K562 (cell line): ENCODE measurements at regions of chr15 and their contacts with region 1.

Region 1: GRCh38 chr15:55434989-55435825 is 26.9 kb downstream of the PIERCE2 start:
- DNase-seq: peak; percentile 33 to 76 (median 48)
- ATAC-seq: peak; percentile 96
- H3K4me3 ChIP-seq: no peak overlapping the region
- H3K27ac ChIP-seq: no peak overlapping the region
- H3K4me1 ChIP-seq: no peaks in the 10 kb centered on the region; a peak in 1 of 5 replicates
- H3K27me3 ChIP-seq: no peaks in the 10 kb centered on the region
- CTCF ChIP-seq: peak; percentile 55 to 77 (median 69); a peak in 5 of 6 replicates
- EP300 ChIP-seq: no peak
- POLR2A ChIP-seq: no peak
- RAD21 ChIP-seq: peak; percentile 75 to 85

Region 2: DNA sequence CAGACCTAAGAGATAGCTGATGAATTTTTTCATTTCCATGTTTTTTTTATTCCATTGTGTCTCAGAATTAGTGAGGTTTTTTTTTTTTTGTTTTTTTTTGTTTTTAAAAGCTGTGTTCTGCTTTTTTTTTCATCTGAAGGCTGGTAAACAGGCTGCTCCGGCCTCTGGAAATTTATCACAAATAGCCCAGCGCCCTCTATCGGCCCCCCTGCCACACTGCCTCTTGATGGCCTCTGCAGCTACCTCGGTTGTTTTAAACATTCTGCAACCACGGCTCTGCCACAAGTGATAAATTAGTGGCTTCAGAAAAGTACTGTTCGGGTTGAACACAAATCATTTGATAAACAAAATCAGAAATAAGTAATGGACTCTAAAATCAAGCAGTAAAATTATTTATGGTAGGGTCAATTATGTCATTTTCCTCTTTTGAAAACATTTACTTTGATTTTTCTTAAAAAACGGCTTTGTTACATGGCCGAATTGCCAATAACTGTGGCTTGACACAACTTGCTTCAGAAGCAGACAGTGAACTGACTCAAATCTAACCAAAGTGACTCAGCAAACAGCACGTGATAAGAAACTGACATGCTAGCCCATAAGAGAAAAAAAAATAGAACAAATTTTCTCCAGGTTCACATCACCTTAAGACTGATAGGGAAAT is 326.2 kb before region 1 on chr15:
- CTCF ChIA-PET with region 1: no interaction called
- POLR2A ChIA-PET with region 1: no interaction called
- in situ Hi-C with region 1: no loop called
- intact Hi-C with region 1: loop called (anchors 5 kb)
- DNase-seq: peak; percentile 67 to 72 (median 69)
- ATAC-seq: peak; percentile 89
- H3K4me3 ChIP-seq: no peak overlapping the region
- H3K27ac ChIP-seq: peak overlapping the region; percentile 37; the same call in 1 of the 3 replicates
- H3K4me1 ChIP-seq: peaks cover 0 to 8% of the 10 kb centered on the region in 2 experiments; a peak in 2 of 5 replicates
- H3K27me3 ChIP-seq: no peaks in the 10 kb centered on the region
- CTCF ChIP-seq: peak; percentile 65 to 80 (median 77)
- EP300 ChIP-seq: no peak
- POLR2A ChIP-seq: no peak
- RAD21 ChIP-seq: peak; percentile 28 to 62; a peak in 2 of 4 replicates

Region 3: GRCh38 chr15:55196458-55197361 is 238.5 kb before region 1 on chr15 and contains the start of gene RSL24D1:
- CTCF ChIA-PET with region 1: no interaction called
- POLR2A ChIA-PET with region 1: interaction called, 5 read pairs
- in situ Hi-C with region 1: no loop called
- intact Hi-C with region 1: loop called (anchors 5 kb)
- DNase-seq: peak; percentile 84 to 99 (median 88)
- ATAC-seq: peak; percentile 96
- H3K4me3 ChIP-seq: peak within 1 kb of the TSS; percentile 90
- H3K27ac ChIP-seq: peak within 1 kb of the TSS; percentile 94
- H3K4me1 ChIP-seq: peaks cover 3 to 20% of the 10 kb centered on the region in 2 experiments; a peak in 3 of 5 replicates
- H3K27me3 ChIP-seq: no peaks in the 10 kb centered on the region
- CTCF ChIP-seq: peak; percentile 59 to 68 (median 62)
- EP300 ChIP-seq: peak; percentile 48; the same call in 1 of the 2 replicates
- POLR2A ChIP-seq: peak; percentile 94
- RAD21 ChIP-seq: peak; percentile 17 to 41; a peak in 3 of 4 replicates
- polyA plus RNA-seq, gene RSL24D1: 272 to 324 TPM

Region 4: GRCh38 chr15:55221090-55222011 is 213.9 kb before region 1 on chr15:
- CTCF ChIA-PET with region 1: interaction called, 13 read pairs
- POLR2A ChIA-PET with region 1: no interaction called
- in situ Hi-C with region 1: loop called (anchors 5 kb)
- intact Hi-C with region 1: loop called (anchors 1 kb)
- DNase-seq: no peak
- ATAC-seq: peak; percentile 19
- H3K4me3 ChIP-seq: no peak overlapping the region
- H3K27ac ChIP-seq: peak overlapping the region; percentile 35; the same call in 1 of the 3 replicates
- H3K4me1 ChIP-seq: peaks cover 0 to 28% of the 10 kb centered on the region in 2 experiments; a peak in 4 of 5 replicates
- H3K27me3 ChIP-seq: no peaks in the 10 kb centered on the region
- CTCF ChIP-seq: no peak
- EP300 ChIP-seq: no peak
- POLR2A ChIP-seq: no peak
- RAD21 ChIP-seq: 0 out of 4 replicates have a peak, but pooled peaks of 1 of the 2 experiments have one; percentile 12

Region 5: DNA sequence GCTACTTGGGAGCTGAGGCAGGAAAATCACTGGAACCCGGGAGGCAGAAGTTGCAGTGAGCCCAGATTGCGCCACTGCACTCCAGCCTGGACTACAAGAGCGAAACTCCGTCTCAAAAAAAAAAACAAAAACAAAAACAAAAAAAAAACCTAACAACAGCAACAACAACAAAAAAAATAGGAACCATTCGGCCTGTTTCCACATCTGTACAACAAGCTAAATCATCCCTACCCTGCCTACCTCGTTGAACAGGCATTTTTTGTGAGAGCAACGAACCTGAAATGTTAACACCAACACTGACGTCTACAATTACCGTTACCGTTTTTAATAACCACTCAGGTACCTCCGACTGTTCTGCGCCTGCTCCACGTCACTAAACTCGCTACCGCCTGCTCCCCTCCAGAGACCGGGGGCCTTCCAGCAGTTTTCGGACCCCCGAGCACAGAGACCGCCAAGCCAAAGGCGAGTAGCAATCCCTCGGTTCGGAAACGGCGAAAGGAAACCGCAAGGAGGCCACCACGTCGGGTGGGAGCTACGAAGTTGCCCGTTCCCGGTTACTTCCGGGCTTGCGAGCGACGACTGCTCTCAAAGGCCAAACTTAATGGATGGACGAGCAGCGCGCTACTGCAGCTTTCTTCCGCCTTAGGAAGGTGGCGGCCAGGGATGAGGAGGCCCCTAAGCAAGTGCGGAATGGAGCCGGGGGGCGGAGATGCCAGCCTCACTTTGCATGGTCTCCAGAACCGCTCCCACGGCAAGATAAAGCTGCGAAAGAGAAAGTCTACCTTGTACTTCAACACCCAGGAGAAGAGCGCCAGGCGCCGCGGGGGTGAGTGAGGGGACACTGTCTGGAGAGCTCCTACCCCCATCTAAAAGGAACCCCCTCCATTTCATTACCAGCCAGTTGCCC is 116.4 kb before region 1 on chr15 and contains the starts of genes PIGB and PIGBOS1:
- CTCF ChIA-PET with region 1: no interaction called
- POLR2A ChIA-PET with region 1: no interaction called
- in situ Hi-C with region 1: no loop called
- intact Hi-C with region 1: loop called (anchors 1 kb)
- DNase-seq: peak; percentile 65 to 93 (median 72)
- ATAC-seq: peak; percentile 91
- H3K4me3 ChIP-seq: peak within 1 kb of the TSS; percentile 69
- H3K27ac ChIP-seq: peak within 1 kb of the TSS; percentile 96
- H3K4me1 ChIP-seq: peaks cover 4 to 9% of the 10 kb centered on the region in 2 experiments; a peak in 2 of 5 replicates
- H3K27me3 ChIP-seq: no peaks in the 10 kb centered on the region
- CTCF ChIP-seq: no peak
- EP300 ChIP-seq: peak; percentile 29; the same call in 1 of the 2 replicates
- POLR2A ChIP-seq: peak; percentile 94
- RAD21 ChIP-seq: no peak
- polyA plus RNA-seq, gene PIGB: 21.0 to 24.4 TPM
- polyA plus RNA-seq, gene PIGBOS1: 70.4 to 76.2 TPM

Region 6: GRCh38 chr15:55407949-55408791 is 27.0 kb before region 1 on chr15 and contains the starts of genes CCPG1 and PIERCE2:
- CTCF ChIA-PET with region 1: no interaction called
- POLR2A ChIA-PET with region 1: interaction called, 6 read pairs
- in situ Hi-C with region 1: no loop called
- intact Hi-C with region 1: loop called (anchors 1 kb)
- DNase-seq: peak; percentile 89 to 95 (median 90)
- ATAC-seq: peak; percentile 84
- H3K4me3 ChIP-seq: peak within 1 kb of the TSS; percentile 69
- H3K27ac ChIP-seq: peak within 1 kb of the TSS; percentile 91
- H3K4me1 ChIP-seq: peaks cover 12 to 16% of the 10 kb centered on the region in 2 experiments
- H3K27me3 ChIP-seq: no peaks in the 10 kb centered on the region
- CTCF ChIP-seq: peak; percentile 73 to 98 (median 77)
- EP300 ChIP-seq: no peak
- POLR2A ChIP-seq: peak; percentile 83
- RAD21 ChIP-seq: peak; percentile 29 to 39; a peak in 2 of 4 replicates
- polyA plus RNA-seq, gene CCPG1: 37.1 to 41.1 TPM
- polyA plus RNA-seq, gene PIERCE2: 4.0 to 4.2 TPM